Activated T-helper 1 cell treated with anti-CD3 and anti-CD28 coated beads, Interleukin-12 subunit alpha, Interleukin-12 subunit beta, Interleukin-2, Interleukin-4 antibody, amounts not matched to agents 30 ng/mL and 10 ng/mL and 1 ng/mL, durations not matched to agents 14 hours and 24 hours and 36 hours (primary cell): ENCODE measurements at regions of chr9 and their contacts with region 1.

Region 1: DNA sequence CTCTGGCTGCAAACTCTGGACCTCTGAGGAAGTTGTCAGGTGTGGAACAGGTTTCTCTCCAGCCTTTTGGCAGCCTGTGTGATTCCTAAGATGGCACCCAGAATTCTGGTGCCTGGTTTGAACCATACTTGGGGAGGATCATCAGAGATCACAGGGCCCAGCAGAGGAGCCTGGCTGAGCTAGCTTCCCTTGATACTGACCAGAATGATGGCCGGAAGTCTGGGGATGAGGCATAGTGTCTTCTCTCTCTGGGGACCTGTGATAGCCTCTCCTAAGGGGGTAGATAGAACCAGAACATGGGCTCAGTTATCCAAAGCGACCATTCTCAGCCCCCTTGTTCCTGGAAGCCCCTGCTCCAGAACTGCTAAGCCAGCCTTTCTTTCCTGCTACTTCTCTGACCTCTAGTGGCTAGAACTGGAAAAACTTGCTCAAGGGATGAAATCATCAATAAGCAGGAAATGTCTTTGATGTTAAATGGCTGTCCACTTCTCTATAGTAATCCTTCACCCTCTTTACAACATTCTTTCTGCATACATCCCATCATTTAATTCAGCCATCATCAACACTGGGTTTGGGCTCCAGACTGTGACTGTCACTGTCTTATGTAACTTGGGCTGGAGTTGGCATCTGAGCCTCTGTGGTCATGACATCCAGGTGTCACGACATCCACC is 55.1 kb downstream of the C9orf152 start:
- DNase-seq: no peak
- H3K4me3 Mint-ChIP-seq: peak overlapping the region; percentile 55
- H3K27ac Mint-ChIP-seq: peak overlapping the region; percentile 79
- H3K4me1 Mint-ChIP-seq: peaks cover 100% of the 10 kb centered on the region
- H3K27me3 Mint-ChIP-seq: no peaks in the 10 kb centered on the region

Region 2: GRCh38 chr9:109101810-109102209 is 1051.0 kb before region 1 on chr9:
- intact Hi-C with region 1: loop called (anchors 10 kb)
- DNase-seq: peak; percentile 14
- H3K4me3 Mint-ChIP-seq: peak overlapping the region; percentile 46
- H3K27ac Mint-ChIP-seq: peak overlapping the region; percentile 73
- H3K4me1 Mint-ChIP-seq: peaks cover 65% of the 10 kb centered on the region
- H3K27me3 Mint-ChIP-seq: no peaks in the 10 kb centered on the region

Region 3: GRCh38 chr9:109520478-109521132 is 632.2 kb before region 1 on chr9:
- intact Hi-C with region 1: no loop called
- DNase-seq: peak; percentile 24
- H3K4me3 Mint-ChIP-seq: no peak overlapping the region
- H3K27ac Mint-ChIP-seq: no peak overlapping the region
- H3K4me1 Mint-ChIP-seq: peaks cover 5% of the 10 kb centered on the region
- H3K27me3 Mint-ChIP-seq: peaks cover 17% of the 10 kb centered on the region

Region 4: DNA sequence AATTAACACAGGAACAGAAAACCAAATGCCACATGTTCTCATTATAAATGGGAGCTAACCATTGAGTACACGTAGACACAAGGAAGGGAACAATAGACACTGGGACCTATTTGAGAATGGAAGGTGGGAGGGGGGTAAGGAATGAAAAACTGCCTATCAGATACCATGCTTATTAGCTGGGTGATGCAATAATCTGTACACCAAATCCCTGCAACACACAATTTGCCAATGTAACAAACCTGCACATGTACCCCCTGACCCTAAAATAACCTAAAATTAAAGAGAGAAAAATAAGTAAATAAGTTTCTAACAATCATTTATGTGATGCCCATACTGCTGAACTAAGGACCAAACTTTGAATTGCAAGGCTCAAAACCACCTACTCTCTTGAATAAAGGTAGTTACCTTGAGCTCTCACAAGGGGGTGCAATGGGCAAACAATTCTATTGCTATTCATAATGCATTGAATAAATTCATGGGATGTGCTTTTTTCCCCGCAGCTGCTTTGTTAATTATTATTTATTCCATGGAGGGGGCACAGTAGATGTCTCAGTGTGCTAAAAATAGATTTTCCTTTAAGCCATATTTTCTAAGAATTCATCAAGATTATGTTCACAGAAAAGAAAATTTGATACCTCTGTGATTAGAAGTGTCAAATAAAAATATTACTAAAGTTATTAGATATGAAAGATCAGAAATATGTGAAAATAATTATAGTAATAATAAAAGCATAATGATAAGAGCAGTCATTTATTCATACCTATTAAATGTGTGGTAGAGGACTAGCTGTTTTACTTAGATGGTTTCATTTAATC is 578.6 kb before region 1 on chr9:
- intact Hi-C with region 1: loop called (anchors 1 kb)
- DNase-seq: peak; percentile 14
- H3K4me3 Mint-ChIP-seq: no peak overlapping the region
- H3K27ac Mint-ChIP-seq: no peak overlapping the region
- H3K4me1 Mint-ChIP-seq: no peaks in the 10 kb centered on the region
- H3K27me3 Mint-ChIP-seq: peaks cover 19% of the 10 kb centered on the region

Region 5: GRCh38 chr9:109894921-109895758 is 257.7 kb before region 1 on chr9:
- intact Hi-C with region 1: loop called (anchors 1 kb)
- DNase-seq: peak; percentile 58
- H3K4me3 Mint-ChIP-seq: peak overlapping the region; percentile 56
- H3K27ac Mint-ChIP-seq: peak overlapping the region; percentile 94
- H3K4me1 Mint-ChIP-seq: peaks cover 74% of the 10 kb centered on the region
- H3K27me3 Mint-ChIP-seq: no peaks in the 10 kb centered on the region

Region 6: GRCh38 chr9:109934857-109935215 is 218.0 kb before region 1 on chr9:
- intact Hi-C with region 1: loop called (anchors 1 kb)
- DNase-seq: no peak
- H3K4me3 Mint-ChIP-seq: peak overlapping the region; percentile 45
- H3K27ac Mint-ChIP-seq: peak overlapping the region; percentile 85
- H3K4me1 Mint-ChIP-seq: peaks cover 57% of the 10 kb centered on the region
- H3K27me3 Mint-ChIP-seq: no peaks in the 10 kb centered on the region

Region 7: GRCh38 chr9:110048403-110048975 is 104.3 kb before region 1 on chr9:
- intact Hi-C with region 1: loop called (anchors 1 kb)
- DNase-seq: peak; percentile 81
- H3K4me3 Mint-ChIP-seq: peak overlapping the region; percentile 93
- H3K27ac Mint-ChIP-seq: peak overlapping the region; percentile 89
- H3K4me1 Mint-ChIP-seq: peaks cover 58% of the 10 kb centered on the region
- H3K27me3 Mint-ChIP-seq: no peaks in the 10 kb centered on the region

Region 8: DNA sequence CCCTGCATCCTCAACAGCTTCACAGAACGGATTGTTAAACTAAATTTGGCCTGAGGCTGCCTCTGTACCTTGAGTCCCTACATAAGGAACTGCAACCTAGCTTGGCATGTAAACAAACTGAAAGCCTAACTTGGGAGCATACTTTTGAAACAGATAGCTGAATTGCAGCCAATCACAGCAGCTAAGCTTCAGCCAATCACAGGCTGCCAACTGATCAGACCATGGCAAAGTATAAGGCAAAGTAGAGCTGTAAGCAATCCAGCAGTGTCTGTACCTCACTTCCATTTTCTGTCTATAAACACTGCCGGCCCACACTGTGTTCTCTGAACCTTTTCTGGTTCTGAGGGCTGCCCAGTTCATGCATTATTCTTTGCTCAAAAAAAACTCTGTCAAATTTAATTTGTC is 1363.2 kb after region 1 on chr9:
- intact Hi-C with region 1: no loop called
- DNase-seq: no peak
- H3K4me3 Mint-ChIP-seq: no peak overlapping the region
- H3K27ac Mint-ChIP-seq: no peak overlapping the region
- H3K4me1 Mint-ChIP-seq: no peaks in the 10 kb centered on the region
- H3K27me3 Mint-ChIP-seq: peaks cover 4% of the 10 kb centered on the region